Activated CD8-positive, alpha-beta T cell treated with anti-CD3 and anti-CD28 coated beads for 36 hours (primary cell): ENCODE measurements at regions of chr14 and their contacts with region 1.

Region 1: DNA sequence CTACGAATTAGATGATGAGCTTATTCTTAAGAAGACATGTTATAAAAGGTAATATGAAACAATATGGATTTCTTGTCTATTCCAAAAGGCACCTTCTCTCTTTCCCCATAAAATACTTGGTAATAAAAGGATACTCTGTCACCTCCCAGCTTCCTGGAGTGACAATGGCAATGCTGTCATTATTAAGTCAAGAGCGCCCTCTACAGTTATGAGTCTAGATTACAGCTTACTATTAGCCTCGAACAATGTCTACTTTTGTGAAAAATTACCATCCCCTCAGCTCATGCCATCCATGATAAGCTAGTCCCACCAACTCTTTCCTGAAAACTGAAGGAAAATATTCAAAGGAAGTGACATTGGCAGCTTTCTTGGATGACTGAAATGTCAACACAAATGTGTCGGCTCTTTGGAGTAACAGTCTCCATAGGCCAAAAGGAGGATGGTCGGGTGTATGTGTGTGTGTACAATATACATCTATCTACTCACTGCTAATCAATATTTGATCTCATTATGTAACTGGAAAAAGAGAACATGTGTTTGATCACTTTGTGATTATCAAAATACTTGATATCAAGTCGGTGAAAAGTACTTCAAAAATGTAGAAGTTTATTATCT is 48.7 kb upstream of the CDKN3 start:
- DNase-seq: no peak
- ATAC-seq: peak; percentile 56
- H3K4me3 Mint-ChIP-seq: no peak overlapping the region
- H3K27ac Mint-ChIP-seq: no peak overlapping the region
- H3K4me1 Mint-ChIP-seq: no peaks in the 10 kb centered on the region
- H3K27me3 Mint-ChIP-seq: peaks cover 10% of the 10 kb centered on the region
- CTCF ChIP-seq: peak; percentile 85

Region 2: DNA sequence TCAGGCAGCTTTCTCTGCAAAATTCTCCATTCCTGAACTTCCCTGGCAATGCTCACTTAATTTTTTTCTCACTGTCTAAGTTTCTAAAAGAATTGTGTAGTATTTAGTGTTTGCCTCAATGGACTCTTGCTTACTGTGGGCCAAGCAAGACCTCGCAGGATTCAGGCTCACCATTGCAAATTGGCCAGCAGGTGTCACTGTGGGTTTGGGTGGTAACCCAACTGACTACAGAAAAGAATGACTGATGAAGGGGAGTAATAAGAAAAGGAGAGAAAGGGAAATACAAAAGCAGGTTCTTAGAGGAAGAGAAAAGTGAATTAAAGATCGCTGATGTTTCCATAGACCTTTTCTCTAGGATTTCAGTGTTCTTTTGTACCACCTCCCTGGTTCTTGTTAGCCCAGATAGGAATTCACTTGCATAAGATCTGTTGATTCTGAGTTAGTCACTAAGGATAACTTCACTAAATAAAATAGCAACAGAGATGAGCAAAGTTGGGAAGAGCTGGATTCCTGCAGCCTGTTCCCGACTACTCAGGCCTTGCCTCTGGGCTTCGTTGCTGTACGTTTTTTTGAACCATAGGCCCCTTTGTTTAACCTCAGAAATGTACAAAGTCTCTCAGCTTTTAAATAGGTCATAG is 808.5 kb before region 1 on chr14:
- CTCF ChIA-PET with region 1: interaction called, 4 read pairs
- POLR2A ChIA-PET with region 1: no interaction called
- intact Hi-C with region 1: loop called (anchors 10 kb)
- DNase-seq: peak; percentile 69
- ATAC-seq: no peak
- H3K4me3 Mint-ChIP-seq: no peak overlapping the region
- H3K27ac Mint-ChIP-seq: no peak overlapping the region
- H3K4me1 Mint-ChIP-seq: no peaks in the 10 kb centered on the region
- H3K27me3 Mint-ChIP-seq: no peaks in the 10 kb centered on the region
- CTCF ChIP-seq: peak; percentile 67

Region 3: DNA sequence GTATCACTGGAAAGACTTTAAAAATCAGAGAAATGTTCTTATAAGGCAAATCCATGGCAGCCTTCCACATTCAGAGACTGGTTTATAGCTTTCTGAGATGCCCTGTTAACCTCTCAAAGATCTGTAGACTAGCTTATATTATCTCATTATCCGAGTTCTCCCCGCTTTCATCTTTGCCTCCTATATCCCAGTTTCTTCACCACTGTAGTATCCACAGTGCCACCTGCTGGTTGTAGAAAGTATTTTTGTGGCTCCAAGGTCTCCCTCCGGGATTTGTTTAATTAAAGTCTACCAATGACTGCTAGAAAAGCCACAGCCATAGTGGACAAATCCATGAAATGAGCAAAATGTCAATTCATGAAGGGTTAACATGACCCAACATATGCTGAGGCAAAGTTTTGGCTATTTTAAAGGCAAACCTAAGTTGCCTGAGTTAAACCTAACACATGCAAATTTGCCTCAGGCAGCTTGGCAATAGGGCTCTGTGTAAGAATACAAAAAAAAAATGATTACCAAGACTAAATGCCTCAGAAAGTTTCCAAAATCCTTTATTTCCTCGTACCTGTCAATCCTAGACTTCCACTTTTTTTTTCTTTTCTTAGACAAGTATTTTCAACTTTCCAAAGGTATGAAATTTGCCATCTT is 172.7 kb before region 1 on chr14:
- CTCF ChIA-PET with region 1: interaction called, 10 read pairs
- POLR2A ChIA-PET with region 1: no interaction called
- intact Hi-C with region 1: no loop called
- DNase-seq: peak; percentile 66
- ATAC-seq: no peak
- H3K4me3 Mint-ChIP-seq: no peak overlapping the region
- H3K27ac Mint-ChIP-seq: no peak overlapping the region
- H3K4me1 Mint-ChIP-seq: no peaks in the 10 kb centered on the region
- H3K27me3 Mint-ChIP-seq: peaks cover 22% of the 10 kb centered on the region
- CTCF ChIP-seq: peak; percentile 75

Region 4: DNA sequence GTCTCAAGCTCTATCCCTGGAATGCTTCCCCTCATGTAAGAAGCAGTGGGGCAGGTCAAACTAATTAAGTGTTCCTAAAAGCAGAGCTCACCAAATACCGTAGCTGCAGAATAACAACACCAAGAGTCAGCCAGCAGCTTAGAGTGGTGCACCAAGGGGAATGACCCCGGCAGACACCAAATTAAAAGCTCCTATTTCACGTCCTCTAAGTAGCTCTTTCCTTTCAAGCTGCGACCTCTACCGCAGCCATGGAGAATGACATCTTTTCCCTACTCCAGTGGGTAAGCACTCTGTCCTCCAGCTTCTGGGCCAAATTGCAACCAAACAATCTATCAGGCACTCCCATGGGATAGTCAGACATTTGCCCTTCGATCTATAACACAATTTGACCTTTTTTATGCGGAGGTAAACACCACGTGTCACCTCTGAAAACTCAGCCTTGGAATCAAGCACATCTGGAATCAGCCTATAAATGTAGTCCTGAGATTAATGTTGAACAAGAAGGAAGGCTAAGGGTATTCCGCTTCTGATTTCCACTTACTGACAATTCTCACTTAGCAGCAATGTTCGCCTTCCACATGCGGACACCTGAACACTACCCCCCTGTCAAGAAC is 18.9 kb before region 1 on chr14:
- CTCF ChIA-PET with region 1: interaction called, 14 read pairs
- POLR2A ChIA-PET with region 1: no interaction called
- intact Hi-C with region 1: no loop called
- DNase-seq: peak; percentile 23
- ATAC-seq: peak; percentile 65
- H3K4me3 Mint-ChIP-seq: no peak overlapping the region
- H3K27ac Mint-ChIP-seq: no peak overlapping the region
- H3K4me1 Mint-ChIP-seq: no peaks in the 10 kb centered on the region
- H3K27me3 Mint-ChIP-seq: peaks cover 8% of the 10 kb centered on the region
- CTCF ChIP-seq: peak; percentile 64

Region 5: DNA sequence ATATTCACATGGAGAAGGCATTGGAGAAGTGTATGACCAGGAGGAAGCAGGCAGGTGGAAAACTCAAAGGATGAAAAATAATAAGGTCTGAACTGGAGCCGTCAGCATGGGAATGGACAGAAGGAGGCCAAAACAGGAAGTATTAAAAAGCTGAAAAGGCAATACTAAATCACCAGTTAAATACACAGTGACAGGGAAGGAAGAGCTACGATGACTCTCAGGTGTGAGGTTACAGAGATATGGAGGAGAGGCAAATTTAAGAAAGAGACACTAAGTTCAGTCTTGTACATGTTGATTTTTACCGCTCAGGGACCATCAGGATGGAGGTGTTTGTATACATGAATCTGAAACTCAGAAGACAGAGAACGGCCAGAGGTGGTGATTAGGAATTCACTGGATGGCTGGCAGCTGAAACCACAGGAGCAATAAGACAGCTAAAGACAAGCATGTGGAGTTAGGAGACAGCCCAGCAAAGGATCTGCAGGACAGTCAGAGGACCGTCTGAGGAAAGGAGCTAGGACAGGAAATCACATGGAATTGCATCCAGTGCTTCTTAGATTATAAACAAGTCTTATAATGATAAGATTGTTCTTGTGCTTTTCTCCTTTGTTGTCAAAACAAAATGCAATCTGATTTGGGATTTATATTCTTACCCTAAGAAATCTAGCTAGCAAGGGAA is 14.8 kb after region 1 on chr14:
- CTCF ChIA-PET with region 1: interaction called, 14 read pairs
- POLR2A ChIA-PET with region 1: no interaction called
- intact Hi-C with region 1: no loop called
- DNase-seq: no peak
- ATAC-seq: no peak
- H3K4me3 Mint-ChIP-seq: no peak overlapping the region
- H3K27ac Mint-ChIP-seq: no peak overlapping the region
- H3K4me1 Mint-ChIP-seq: no peaks in the 10 kb centered on the region
- H3K27me3 Mint-ChIP-seq: peaks cover 15% of the 10 kb centered on the region
- CTCF ChIP-seq: no peak

Region 6: GRCh38 chr14:54420013-54420809 is 72.1 kb after region 1 on chr14:
- CTCF ChIA-PET with region 1: no interaction called
- POLR2A ChIA-PET with region 1: no interaction called
- intact Hi-C with region 1: no loop called
- DNase-seq: peak; percentile 15
- ATAC-seq: peak; percentile 34
- H3K4me3 Mint-ChIP-seq: no peak overlapping the region
- H3K27ac Mint-ChIP-seq: no peak overlapping the region
- H3K4me1 Mint-ChIP-seq: peaks cover 16% of the 10 kb centered on the region
- H3K27me3 Mint-ChIP-seq: no peaks in the 10 kb centered on the region
- CTCF ChIP-seq: peak; percentile 26